Cardiac septum (tissue), 1 donor: ENCODE measurements at regions of chr3 and their contacts with region 1.

Region 1: DNA sequence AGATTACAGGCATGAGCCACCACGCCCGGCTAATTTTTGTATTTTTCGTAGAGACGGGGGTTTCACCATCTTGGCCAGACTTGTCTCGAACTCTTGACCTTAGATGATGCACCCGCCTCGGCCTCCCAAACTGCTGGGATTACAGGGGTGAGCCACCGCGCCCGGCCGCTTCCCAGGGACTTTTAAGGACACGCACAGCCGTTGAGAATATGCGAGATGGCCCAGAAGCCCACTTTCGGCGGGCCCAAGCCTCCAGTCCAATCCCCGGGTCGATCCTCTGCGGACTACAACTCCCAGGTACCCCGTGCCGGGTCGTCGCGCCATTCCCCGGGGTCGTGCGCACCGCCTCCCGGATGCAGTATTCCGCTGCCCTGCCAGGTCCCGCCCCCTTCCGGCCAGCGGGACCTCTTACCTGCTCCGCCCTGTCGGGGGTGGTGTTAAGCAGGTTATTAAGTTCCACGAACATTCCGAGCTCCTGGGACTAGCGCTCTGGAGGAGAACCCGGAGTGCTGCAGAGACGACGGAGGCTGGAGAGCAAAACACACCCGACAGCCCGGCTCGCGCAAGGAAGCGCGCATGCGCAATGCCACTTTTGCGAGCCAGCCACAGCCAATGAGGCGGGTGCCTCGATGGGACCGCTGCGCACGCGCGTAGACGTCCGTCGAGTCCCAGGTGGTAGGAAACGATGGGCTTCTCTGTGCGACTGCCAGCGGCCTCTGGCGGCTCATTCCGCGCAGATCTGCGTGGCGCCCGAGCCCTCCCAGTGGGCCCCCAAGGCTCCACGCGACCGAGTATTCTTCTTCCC is at the start of gene ELP6:
- DNase-seq: peak; percentile 98
- total RNA-seq, gene ELP6: 15.8 TPM

Region 2: DNA sequence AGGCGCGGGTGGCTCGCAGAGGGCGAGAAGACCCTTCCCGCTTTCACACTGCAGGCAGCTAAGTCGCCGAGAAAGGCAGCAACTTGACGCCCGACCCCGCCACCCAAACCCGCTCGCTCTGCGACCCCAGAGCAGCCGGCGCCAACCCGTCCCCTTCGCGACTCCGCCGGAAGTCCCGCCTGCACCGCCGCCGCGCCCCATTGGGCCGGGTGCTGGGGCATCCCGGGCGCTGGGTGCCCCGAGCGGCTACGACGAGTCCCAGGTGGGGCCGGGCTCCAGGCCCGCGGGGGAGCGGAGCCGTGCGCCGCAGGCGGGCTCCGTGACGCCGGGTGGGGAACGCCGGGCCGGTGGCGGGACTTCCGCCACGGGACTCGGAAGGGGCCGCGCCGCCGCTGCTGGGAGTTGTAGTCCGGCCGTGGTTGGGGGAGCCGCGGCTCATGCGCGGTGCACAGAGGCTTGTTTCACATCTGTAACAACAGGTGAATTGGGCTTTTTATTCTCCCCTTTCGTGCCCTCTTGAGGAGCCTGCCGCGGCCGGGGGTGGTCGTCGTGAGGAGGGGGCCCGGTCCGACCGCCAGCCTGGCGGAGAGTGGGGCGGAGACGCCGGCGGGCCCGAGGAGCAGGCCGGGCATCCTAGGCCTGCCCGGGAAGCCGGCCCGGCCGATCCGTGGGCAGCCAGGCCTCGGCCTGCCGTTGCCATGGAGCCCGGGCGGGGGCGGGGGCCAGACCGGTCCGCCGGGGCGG is 289.6 kb after region 1 on chr3 and contains the start of gene DHX30:
- intact Hi-C with region 1: loop called (anchors 5 kb)
- DNase-seq: peak; percentile 95
- total RNA-seq, gene DHX30: 48.3 TPM